Left cardiac atrium (tissue), 4 donors: ENCODE measurements at regions of chr3 and their contacts with region 1.

Region 1: DNA sequence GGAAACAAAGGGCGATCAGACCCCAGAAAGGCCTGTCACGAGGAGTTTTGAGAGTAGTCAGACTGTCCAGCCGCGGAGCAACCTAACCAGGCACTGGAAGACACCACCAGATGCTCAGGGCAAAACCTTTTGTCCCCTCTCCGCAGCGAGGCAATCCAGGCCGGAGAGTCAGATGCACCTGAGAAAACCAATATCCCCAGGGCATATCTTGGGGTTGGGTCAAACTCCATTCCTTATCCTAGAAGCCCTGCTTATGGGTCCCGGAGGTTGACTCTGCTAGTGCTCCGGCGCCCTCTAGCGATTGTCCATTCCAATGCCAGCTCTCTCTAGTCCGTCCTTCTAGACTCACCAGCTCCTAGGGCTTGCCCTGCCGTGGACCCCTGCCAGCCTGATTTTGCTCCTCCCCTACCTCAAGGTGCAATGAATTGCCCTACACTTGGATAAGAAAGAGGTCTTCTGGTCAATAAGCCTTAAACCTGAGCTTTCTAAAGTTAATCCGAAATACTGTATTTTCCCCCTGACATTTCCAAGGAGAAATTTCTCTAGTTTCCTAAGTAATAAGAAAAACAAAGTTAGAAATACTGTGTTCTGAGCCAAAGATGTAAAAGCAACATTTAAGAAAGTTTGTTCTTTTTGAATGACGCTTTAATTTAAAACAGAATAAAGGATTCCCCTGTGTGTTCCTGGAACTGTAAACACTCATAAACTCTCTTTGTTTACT is 5.5 kb downstream of the CPNE4 start:
- DNase-seq: peak; percentile 85
- ATAC-seq: peak; percentile 88 to 95

Region 2: DNA sequence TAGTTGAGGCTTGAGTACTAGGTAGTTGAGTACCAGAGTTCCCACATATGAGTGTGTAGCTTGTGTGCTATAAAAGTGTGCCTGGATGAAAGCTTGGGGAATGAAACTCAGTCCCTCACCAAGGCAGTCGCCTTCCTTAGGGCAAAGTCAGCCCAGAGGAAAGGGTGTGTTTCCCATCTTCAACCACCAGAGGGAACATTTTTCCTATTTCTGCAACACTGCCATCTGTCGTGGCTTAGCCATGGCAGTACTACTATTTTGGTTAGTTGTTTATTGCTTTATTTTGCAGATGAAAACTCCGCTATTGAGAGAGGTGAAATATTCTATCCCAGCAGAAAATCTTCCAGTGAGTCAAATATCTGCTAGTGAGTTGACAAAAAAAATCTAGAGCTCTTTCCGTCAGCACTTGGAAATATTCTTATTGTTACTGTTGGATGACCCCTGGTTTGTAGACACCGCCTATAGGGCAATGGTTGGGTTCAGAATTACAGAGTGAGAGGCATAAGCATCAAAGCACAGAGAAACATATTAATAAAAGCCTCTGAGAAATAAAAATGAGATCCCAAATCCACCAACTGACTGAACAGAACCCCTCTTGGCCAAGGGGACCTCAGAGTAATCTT is 234.5 kb before region 1 on chr3:
- intact Hi-C with region 1: loop called (anchors 2 to 5 kb)
- DNase-seq: no peak
- ATAC-seq: peak; percentile 78 to 88

Region 3: DNA sequence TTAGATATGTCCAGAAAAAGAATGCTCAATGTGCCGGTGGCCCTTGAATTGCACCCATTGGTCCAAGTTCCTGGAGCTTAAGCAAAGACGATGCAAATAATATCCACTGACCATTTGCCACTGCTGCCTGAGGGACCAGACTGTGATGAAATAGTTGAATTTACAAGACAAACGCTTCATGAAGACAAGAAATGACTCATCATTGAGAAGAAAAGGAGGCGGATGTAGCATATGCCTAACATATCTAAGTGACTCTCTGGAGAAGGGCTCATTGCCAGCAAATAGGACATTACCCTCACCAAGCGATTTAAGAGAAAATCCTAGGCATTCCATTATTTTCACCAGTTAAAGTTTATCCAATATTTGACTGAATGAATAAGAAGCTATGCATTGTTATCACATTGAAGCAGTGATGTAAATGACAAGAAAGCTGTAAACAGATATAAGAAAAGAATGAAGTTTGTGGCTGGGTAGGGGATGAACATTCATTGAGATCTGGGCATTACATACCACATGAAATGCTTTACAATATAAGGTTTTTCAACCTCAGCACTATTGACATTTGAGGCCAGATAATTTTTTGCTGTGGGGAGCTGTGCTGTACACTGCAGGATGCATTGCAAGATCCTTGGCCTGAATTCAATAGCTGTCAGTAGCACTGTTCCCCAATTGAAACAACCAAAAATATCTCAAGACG is 54.4 kb after region 1 on chr3:
- intact Hi-C with region 1: no loop called
- DNase-seq: no peak
- ATAC-seq: no peak